ENCODE measurements at regions of chr3 and their contacts with region 1.

Region 1: GRCh38 chr3:72375237-72376076 is 472.8 kb downstream of the SHQ1 start:
- DNase-seq: peak in 2 of 10 donors; percentile 11 to 30
- ATAC-seq: peak; percentile 80 to 84
- H3K4me3 Mint-ChIP-seq: peak overlapping the region in 4 of 10 donors; percentile 0 to 42 (median 32)
- H3K27ac Mint-ChIP-seq: peak overlapping the region in 7 of 10 donors; percentile 5 to 78 (median 64)
- H3K4me1 Mint-ChIP-seq: peaks cover 11 to 58% (median 41%) of the 10 kb centered on the region in 4 donors
- H3K27me3 Mint-ChIP-seq: no peaks in the 10 kb centered on the region

Region 2: DNA sequence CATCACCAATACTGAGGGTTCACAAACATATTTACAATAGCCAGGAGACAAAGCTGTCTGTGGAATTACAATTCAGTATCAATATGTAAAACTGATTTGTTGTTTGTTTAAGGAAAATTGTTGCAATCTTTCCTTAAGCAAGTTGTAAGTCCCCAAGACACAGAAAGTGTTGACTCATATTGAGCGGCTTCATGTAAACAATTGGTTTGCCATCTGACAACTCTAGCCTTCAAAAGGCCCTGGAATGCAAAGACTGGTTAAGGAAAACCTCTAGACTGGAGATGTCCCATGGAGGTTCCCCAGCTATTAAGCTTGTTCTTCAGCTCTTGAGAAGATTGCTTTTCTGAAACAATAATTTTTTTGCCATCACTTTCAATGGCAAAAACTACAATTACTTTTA is 306.8 kb before region 1 on chr3:
- POLR2A ChIA-PET with region 1: no interaction called
- DNase-seq: no peak
- ATAC-seq: no peak
- H3K4me3 Mint-ChIP-seq: no peak overlapping the region
- H3K27ac Mint-ChIP-seq: no peak overlapping the region
- H3K4me1 Mint-ChIP-seq: no peaks in the 10 kb centered on the region
- H3K27me3 Mint-ChIP-seq: peaks cover 0 to 11% (median 9%) of the 10 kb centered on the region in 5 donors

Region 3: DNA sequence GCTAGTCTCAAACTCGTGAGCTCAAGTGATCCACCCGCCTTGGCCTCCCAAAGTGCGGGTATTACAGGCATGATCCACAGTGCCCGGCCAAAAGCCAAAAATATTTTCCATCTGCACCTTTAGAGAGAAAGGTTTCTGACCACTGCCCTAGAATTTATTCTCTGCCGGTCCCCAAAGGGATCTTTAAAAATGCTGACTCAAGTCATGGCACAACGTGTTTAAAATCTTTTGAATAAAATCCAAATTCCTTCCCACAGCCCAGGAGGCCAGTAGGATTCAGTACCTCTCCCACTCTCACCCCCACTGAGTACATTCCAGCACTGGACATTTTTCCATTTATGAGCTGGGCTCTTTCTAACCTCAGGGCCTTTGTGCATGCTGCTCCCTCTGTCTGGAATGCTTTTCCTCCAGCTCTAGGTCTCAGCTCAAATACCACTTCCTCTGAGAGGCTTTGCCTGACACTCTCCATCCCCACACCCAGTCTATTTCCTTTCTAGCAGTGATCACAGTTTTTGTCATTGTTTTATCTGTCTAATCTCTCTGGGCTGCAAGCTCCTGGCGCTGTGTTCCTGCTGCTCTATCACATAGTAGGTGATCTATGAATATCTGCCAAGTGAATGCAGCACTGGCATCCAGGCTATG is 30.1 kb before region 1 on chr3:
- POLR2A ChIA-PET with region 1: interaction called, 12 read pairs
- DNase-seq: peak in 3 of 10 donors; percentile 5 to 29 (median 16)
- ATAC-seq: no peak
- H3K4me3 Mint-ChIP-seq: peak overlapping the region in 9 of 10 donors; percentile 9 to 75 (median 40)
- H3K27ac Mint-ChIP-seq: peak overlapping the region; percentile 29 to 95 (median 68)
- H3K4me1 Mint-ChIP-seq: peaks cover 28 to 78% (median 74%) of the 10 kb centered on the region in 4 donors
- H3K27me3 Mint-ChIP-seq: no peaks in the 10 kb centered on the region